Activated B cell treated with CpG ODN at 0.5 μM for 24 hours (primary cell): ENCODE measurements at regions of chr10 and their contacts with region 1.

Region 1: DNA sequence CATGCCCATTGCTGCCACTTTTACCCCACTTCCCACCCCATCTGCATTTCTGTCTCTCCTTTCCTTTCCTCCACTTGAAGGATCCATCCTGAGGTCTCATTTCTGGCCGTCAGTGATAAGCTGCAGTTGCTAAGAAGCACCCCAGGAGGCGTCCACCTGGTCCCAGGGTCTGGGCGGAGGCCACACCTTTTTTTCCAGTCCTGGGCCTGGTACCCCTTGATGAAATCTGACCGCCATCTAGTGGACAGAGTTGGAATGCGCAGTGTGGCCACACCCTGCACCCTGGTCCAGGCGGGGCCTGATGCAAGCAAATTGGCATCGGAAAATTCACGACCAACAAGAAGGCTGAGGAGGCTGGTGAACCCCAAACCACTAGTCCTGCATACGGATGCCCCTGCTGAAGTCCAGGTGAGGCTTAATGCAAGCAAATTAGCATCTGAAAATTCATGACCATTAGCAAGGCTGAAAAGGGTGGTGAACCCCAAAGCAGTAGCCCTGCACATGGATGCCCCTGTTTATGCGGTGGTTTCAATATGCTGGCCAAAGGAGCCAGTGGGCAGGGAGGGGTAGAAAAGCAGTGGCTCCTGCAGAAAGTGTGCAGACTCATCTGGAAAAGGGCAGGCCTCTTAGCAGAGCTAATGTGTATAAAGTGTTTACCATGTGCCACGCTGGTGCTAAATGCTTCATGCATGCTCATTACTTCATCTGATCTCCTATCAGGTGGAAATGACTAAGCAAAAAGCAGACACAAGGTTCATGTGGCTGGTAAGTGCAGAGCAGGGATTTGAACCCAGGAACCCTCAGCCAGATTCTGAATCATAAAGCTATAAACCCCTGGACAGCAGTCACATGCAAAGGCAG is 43.2 kb downstream of the GPAM start:
- DNase-seq: peak; percentile 53
- ATAC-seq: peak; percentile 99
- H3K4me3 Mint-ChIP-seq: no peak overlapping the region
- H3K27ac Mint-ChIP-seq: no peak overlapping the region
- H3K4me1 Mint-ChIP-seq: peaks cover 3% of the 10 kb centered on the region
- H3K27me3 Mint-ChIP-seq: no peaks in the 10 kb centered on the region
- CTCF ChIP-seq: peak; percentile 61

Region 2: GRCh38 chr10:112092502-112092901 is 47.8 kb before region 1 on chr10:
- CTCF ChIA-PET with region 1: no interaction called
- POLR2A ChIA-PET with region 1: no interaction called
- intact Hi-C with region 1: no loop called
- DNase-seq: no peak
- ATAC-seq: no peak
- H3K4me3 Mint-ChIP-seq: no peak overlapping the region
- H3K27ac Mint-ChIP-seq: no peak overlapping the region
- H3K4me1 Mint-ChIP-seq: no peaks in the 10 kb centered on the region
- H3K27me3 Mint-ChIP-seq: no peaks in the 10 kb centered on the region
- CTCF ChIP-seq: no peak

Region 3: DNA sequence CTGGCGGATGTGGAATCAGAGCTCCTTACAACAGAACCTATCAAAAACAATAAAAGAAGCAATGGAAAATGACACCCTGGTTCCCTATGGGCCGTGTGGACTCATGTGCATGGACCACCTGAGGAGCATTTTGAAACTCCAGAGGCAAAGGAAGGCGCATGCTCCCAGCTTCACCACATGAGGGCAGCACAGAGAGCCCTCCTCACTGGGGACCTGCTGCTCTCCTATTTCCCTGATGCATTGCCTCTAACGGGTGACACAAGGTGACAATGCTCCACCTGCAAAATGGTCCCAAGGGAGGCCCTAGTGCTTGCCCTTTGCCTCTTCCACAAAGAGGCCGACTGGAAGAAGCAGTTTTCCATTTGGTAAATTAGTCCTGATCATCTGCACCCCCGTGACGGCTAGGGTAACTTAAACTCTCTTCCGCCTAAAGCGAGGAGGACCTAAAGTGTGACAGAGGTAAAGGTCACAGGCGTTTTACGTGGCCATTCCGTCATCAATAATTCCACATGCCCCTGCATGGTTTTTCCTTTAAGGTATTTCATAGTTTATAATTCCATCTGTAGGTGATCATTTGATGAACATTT is 24.4 kb before region 1 on chr10:
- CTCF ChIA-PET with region 1: interaction called, 12 read pairs
- POLR2A ChIA-PET with region 1: no interaction called
- intact Hi-C with region 1: no loop called
- DNase-seq: no peak
- ATAC-seq: peak; percentile 54
- H3K4me3 Mint-ChIP-seq: no peak overlapping the region
- H3K27ac Mint-ChIP-seq: no peak overlapping the region
- H3K4me1 Mint-ChIP-seq: no peaks in the 10 kb centered on the region
- H3K27me3 Mint-ChIP-seq: no peaks in the 10 kb centered on the region
- CTCF ChIP-seq: no peak

Region 4: GRCh38 chr10:112314822-112315474 is 174.6 kb after region 1 on chr10:
- CTCF ChIA-PET with region 1: interaction called, 4 read pairs
- POLR2A ChIA-PET with region 1: no interaction called
- intact Hi-C with region 1: loop called (anchors 1 kb)
- DNase-seq: peak; percentile 34
- ATAC-seq: peak; percentile 62
- H3K4me3 Mint-ChIP-seq: no peak overlapping the region
- H3K27ac Mint-ChIP-seq: no peak overlapping the region
- H3K4me1 Mint-ChIP-seq: no peaks in the 10 kb centered on the region
- H3K27me3 Mint-ChIP-seq: peaks cover 12% of the 10 kb centered on the region
- CTCF ChIP-seq: peak; percentile 31

Region 5: GRCh38 chr10:112434988-112435619 is 294.8 kb after region 1 on chr10:
- CTCF ChIA-PET with region 1: interaction called, 11 read pairs
- POLR2A ChIA-PET with region 1: no interaction called
- intact Hi-C with region 1: no loop called
- DNase-seq: no peak
- ATAC-seq: no peak
- H3K4me3 Mint-ChIP-seq: no peak overlapping the region
- H3K27ac Mint-ChIP-seq: no peak overlapping the region
- H3K4me1 Mint-ChIP-seq: no peaks in the 10 kb centered on the region
- H3K27me3 Mint-ChIP-seq: no peaks in the 10 kb centered on the region
- CTCF ChIP-seq: no peak